Left ventricle myocardium inferior (tissue), 1 donor: ENCODE measurements at regions of chr20 and their contacts with region 1.

Region 1: GRCh38 chr20:37534401-37535157 is 6.9 kb upstream of the BLCAP start:
- DNase-seq: no peak
- H3K4me3 ChIP-seq: no peak overlapping the region
- H3K27ac ChIP-seq: no peak overlapping the region
- H3K4me1 ChIP-seq: peaks cover 4% of the 10 kb centered on the region
- H3K27me3 ChIP-seq: no peaks in the 10 kb centered on the region
- CTCF ChIP-seq: peak; percentile 93

Region 2: DNA sequence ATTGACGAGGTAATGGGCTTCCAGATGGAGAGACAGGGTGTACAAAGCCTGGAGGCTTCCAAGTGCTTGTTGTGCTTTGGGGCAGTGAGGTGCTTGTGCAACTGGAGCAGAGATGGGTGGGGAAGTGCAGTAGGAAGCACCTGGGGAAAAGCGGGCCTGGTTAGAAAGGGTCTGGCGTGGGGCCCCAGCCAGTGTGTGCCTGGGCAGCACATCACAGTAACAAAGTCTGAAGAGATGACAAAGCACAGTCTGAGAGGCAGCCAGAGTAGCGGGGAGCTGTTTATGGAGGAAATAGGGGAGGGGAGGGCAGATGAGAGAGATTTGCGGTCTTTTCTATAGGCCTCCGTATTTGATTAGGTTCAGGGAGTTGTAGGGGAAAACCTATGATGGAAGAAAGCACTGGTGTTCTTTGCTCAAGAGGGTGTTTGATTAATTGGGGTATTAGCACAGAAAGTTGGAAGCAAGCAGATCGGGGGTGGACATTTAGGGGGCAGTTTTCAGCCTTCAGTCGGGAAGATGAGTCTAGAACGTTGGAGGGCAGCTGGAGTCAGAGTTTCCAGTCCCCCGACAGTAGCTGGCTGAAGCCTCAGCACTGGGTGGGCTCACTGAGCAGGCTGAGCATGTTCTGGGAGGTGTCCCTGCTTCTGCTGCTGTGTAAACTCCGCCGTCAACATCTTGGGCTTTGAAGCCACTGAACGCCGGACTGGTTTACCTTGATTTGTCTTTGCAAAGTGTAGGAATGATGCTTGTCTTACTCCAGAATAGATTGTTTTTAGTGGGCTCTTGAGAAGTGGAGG is 339.8 kb before region 1 on chr20:
- intact Hi-C with region 1: loop called (anchors 5 kb)
- DNase-seq: no peak
- H3K4me3 ChIP-seq: no peak overlapping the region
- H3K27ac ChIP-seq: no peak overlapping the region
- H3K4me1 ChIP-seq: peaks cover 60% of the 10 kb centered on the region
- H3K27me3 ChIP-seq: no peaks in the 10 kb centered on the region
- CTCF ChIP-seq: no peak

Region 3: GRCh38 chr20:37265152-37265551 is 269.4 kb before region 1 on chr20:
- intact Hi-C with region 1: loop called (anchors 5 kb)
- DNase-seq: no peak
- H3K4me3 ChIP-seq: no peak overlapping the region
- H3K27ac ChIP-seq: no peak overlapping the region
- H3K4me1 ChIP-seq: no peaks in the 10 kb centered on the region
- H3K27me3 ChIP-seq: peaks cover 36% of the 10 kb centered on the region
- CTCF ChIP-seq: no peak

Region 4: GRCh38 chr20:37384683-37385174 is 149.8 kb before region 1 on chr20:
- intact Hi-C with region 1: loop called (anchors 10 kb)
- DNase-seq: peak; percentile 66
- H3K4me3 ChIP-seq: peak overlapping the region; percentile 69
- H3K27ac ChIP-seq: peak overlapping the region; percentile 30
- H3K4me1 ChIP-seq: peaks cover 15% of the 10 kb centered on the region
- H3K27me3 ChIP-seq: peaks cover 4% of the 10 kb centered on the region
- CTCF ChIP-seq: peak; percentile 92

Region 5: DNA sequence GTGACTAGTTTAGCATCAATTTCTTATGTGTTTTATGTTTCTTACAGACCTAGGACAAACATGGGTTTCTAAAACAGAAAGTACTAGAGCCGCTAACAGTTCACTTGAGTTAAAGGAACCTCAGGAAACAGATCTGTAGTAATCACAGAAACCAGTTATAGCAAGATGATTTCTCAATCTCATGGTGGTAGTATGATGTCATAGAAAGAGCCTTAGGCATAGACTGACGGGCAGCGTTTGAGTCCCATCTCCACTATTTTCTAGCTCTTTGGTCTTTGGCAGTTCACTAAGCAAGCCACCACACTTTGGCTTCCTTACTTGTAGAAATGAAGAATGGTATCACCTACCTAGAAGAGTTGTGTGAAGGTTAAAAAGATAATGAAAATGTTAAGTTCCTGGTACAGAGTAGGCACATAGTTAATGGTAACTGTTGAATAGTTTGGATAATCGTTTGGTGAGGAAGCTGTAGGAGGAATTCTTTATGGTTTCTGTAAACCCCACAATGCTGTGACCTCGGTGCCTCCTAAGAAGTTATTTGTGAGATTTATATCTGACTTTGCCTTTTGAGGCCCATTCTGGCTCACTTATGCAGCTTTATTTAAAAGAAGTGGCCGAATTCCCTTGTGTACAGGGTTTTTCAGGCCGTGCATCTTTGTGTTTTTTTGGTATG is 180.6 kb after region 1 on chr20:
- intact Hi-C with region 1: no loop called
- DNase-seq: no peak
- H3K4me3 ChIP-seq: no peak overlapping the region
- H3K27ac ChIP-seq: no peak overlapping the region
- H3K4me1 ChIP-seq: peaks cover 57% of the 10 kb centered on the region
- H3K27me3 ChIP-seq: no peaks in the 10 kb centered on the region
- CTCF ChIP-seq: no peak

Region 6: GRCh38 chr20:37808233-37809070 is 273.9 kb after region 1 on chr20:
- intact Hi-C with region 1: no loop called
- DNase-seq: no peak
- H3K4me3 ChIP-seq: no peak overlapping the region
- H3K27ac ChIP-seq: no peak overlapping the region
- H3K4me1 ChIP-seq: peaks cover 9% of the 10 kb centered on the region
- H3K27me3 ChIP-seq: no peaks in the 10 kb centered on the region
- CTCF ChIP-seq: no peak